PC-9 (cell line): ENCODE measurements at regions of chr10 and their contacts with region 1.

Region 1: GRCh38 chr10:126459878-126460481 is 71.7 kb upstream of the ADAM12 start:
- DNase-seq: peak; percentile 74 to 98
- H3K4me3 ChIP-seq: no peak overlapping the region
- H3K27ac ChIP-seq: peak overlapping the region; percentile 77
- H3K4me1 ChIP-seq: peaks cover 32% of the 10 kb centered on the region
- H3K27me3 ChIP-seq: no peaks in the 10 kb centered on the region
- CTCF ChIP-seq: no peak

Region 2: GRCh38 chr10:126425489-126426452 is 34.2 kb before region 1 on chr10:
- CTCF ChIA-PET with region 1: no interaction called
- POLR2A ChIA-PET with region 1: no interaction called
- intact Hi-C with region 1: loop called (anchors 1 kb)
- DNase-seq: peak in 1 of 2 experiments; percentile 44
- H3K4me3 ChIP-seq: no peak overlapping the region
- H3K27ac ChIP-seq: no peak overlapping the region
- H3K4me1 ChIP-seq: peaks cover 10% of the 10 kb centered on the region; the same call in 1 of the 2 replicates
- H3K27me3 ChIP-seq: no peaks in the 10 kb centered on the region
- CTCF ChIP-seq: no peak